Activated B cell treated with CpG ODN at 0.5 μM for 24 hours (primary cell): ENCODE measurements at regions of chrX and their contacts with region 1.

Region 1: DNA sequence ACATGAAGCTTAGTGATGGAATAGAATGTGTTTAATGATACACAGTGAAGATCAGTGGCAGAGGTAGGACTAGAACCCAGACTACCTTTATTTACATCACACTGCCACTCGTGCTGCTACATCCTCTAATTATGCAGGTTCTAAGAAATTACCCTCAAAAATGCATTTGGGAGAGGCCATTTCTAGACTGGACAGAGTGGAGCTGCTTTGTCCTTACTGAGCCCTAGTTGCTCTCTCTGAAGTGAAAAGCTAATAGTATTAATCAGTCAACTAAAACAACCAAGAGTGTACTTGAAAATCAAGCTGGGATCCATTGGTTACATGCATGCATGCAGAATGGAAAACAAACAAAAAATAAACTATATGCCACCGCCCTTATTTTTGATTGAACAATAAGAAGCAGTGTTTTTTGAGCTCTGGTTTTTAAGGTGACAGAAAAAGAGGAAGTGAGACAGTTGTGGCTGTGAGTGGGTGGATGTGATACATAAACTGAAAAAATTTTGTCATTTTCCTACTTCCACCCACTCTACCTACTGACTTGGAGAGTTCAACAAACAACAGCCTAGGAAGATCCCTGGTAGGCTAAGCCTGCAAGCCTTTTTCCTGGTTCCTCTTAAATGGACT is 6.8 kb upstream of the VSIG4 start:
- DNase-seq: no peak
- ATAC-seq: peak; percentile 81
- H3K4me3 Mint-ChIP-seq: peak overlapping the region; percentile 28
- H3K27ac Mint-ChIP-seq: peak overlapping the region; percentile 83
- H3K4me1 Mint-ChIP-seq: peaks cover 45% of the 10 kb centered on the region
- H3K27me3 Mint-ChIP-seq: no peaks in the 10 kb centered on the region
- CTCF ChIP-seq: no peak

Region 2: DNA sequence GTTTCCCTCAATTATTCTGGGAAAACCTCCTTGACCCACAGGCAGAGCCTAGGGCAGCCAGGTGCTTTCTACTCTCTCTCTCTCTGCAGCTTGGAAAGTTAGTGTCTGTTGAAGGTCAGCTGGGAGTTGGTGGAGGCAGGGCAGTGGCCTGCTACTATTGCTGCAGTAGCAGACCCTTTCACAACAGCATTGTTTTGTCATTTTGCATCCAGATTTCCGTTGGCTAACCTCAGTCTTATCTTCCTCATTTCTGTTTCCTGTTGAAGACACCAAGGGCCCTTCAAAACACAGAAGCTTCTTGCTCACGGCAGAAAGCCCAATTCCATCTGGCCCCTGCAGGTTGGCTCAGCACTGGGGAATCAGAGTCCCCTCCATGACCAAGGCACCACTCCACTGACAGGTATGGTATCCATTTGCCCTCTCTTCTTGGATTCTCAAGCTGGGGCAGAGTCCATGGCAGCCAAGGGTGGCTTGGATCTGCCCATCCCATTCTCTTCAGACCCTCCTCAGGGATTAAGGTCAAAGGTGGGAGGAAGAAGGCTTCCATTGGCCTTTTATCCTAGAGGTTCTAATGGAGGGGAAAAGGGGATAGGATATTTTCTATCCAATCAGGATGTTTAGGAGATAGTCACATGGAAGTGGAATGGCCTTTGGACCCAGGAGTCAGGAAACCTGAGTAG is 31.4 kb before region 1 on chrX:
- CTCF ChIA-PET with region 1: interaction called, 3 read pairs
- POLR2A ChIA-PET with region 1: interaction called, 4 read pairs
- intact Hi-C with region 1: loop called (anchors 2 kb)
- DNase-seq: peak; percentile 16
- ATAC-seq: peak; percentile 43
- H3K4me3 Mint-ChIP-seq: peak overlapping the region; percentile 73
- H3K27ac Mint-ChIP-seq: peak overlapping the region; percentile 93
- H3K4me1 Mint-ChIP-seq: peaks cover 95% of the 10 kb centered on the region
- H3K27me3 Mint-ChIP-seq: no peaks in the 10 kb centered on the region
- CTCF ChIP-seq: no peak

Region 3: DNA sequence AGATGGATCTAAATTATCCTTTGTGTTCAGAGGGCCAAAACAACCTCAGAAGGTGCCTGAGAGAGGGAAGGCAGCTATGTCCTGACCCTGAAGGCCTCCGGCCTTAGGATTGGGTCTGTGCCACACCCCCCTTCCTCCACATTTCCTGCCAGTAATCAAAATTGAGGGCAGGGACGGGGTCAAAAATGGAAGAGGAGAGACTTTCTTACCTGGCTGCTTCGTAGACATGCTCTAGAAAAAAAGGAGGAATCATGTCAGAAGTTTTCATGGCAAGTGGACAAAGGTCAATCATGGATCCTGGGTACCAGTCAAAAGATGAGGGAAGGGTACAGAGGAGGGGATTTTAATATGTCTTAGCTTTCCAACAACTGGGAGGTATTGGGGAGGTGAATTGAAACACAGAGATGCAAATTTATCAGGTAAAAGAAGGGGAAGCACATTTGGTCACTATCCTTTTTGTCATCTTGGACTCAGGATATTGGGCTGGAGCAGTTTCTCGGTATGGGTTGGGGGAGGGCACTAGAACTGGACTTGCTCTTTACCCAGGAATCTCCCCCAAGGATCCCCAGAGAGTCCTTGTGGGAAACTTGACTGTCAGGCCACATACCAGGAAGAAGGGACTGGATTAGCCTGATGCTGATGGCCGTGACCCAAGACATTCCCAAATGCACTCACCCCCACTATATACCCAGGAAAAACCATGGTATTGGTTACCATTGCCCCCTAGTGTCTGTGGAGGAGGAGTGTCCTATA is 23.9 kb before region 1 on chrX:
- CTCF ChIA-PET with region 1: interaction called, 3 read pairs
- POLR2A ChIA-PET with region 1: interaction called, 10 read pairs
- intact Hi-C with region 1: no loop called
- DNase-seq: no peak
- ATAC-seq: peak; percentile 29
- H3K4me3 Mint-ChIP-seq: no peak overlapping the region
- H3K27ac Mint-ChIP-seq: peak overlapping the region; percentile 81
- H3K4me1 Mint-ChIP-seq: peaks cover 77% of the 10 kb centered on the region
- H3K27me3 Mint-ChIP-seq: no peaks in the 10 kb centered on the region
- CTCF ChIP-seq: no peak